ENCODE measurements at regions of chr9 and their contacts with region 1.

Region 1: GRCh38 chr9:133485361-133486260 is 6.7 kb upstream of the SLC2A6 start:
- DNase-seq: peak in 3 of 6 donors; percentile 15 to 74 (median 61)
- ATAC-seq: peak; percentile 18 to 37 (median 26)
- H3K4me3 ChIP-seq: no peak overlapping the region
- H3K27ac ChIP-seq: no peak overlapping the region
- H3K4me1 ChIP-seq: no peaks in the 10 kb centered on the region
- H3K27me3 ChIP-seq: no peaks in the 10 kb centered on the region
- CTCF ChIP-seq: no peak

Region 2: GRCh38 chr9:133184962-133185361 is 300.6 kb before region 1 on chr9:
- intact Hi-C with region 1: loop called in 2 of 3 experiments (anchors 5 to 10 kb)
- DNase-seq: peak in 2 of 6 donors; percentile 30 to 42
- ATAC-seq: peak; percentile 72 to 91 (median 87)
- H3K4me3 ChIP-seq: no peak overlapping the region
- H3K27ac ChIP-seq: no peak overlapping the region
- H3K4me1 ChIP-seq: no peaks in the 10 kb centered on the region
- H3K27me3 ChIP-seq: no peaks in the 10 kb centered on the region
- CTCF ChIP-seq: peak in 2 of 4 donors; percentile 32 to 38

Region 3: DNA sequence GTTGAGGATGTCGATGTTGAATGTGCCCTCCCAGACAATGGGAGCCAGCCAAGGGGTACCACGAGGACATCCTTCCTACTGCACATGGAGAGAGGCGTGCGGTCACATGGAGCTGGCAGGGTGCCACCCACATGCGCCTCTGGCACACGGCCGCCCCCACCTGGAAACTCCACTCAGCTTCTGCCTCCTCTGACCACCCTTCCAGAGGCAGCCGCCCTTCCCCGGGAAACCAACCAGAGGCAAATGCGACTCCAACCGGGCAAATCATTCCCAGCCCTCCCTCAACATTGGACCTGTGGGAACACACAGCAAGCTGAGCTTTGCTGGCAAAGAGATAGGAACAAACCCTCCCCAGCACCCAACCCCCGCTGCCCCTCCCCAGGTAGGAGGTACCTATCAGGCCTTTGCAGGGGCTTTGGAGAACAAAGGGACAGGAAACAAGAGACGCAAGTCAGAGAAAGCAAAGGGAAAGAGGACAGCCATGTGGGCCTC is 228.1 kb before region 1 on chr9:
- intact Hi-C with region 1: no loop called
- DNase-seq: peak in 1 of 6 donors; percentile 62
- ATAC-seq: peak in 2 of 4 donors; percentile 5 to 29
- H3K4me3 ChIP-seq: no peak overlapping the region
- H3K27ac ChIP-seq: no peak overlapping the region
- H3K4me1 ChIP-seq: no peaks in the 10 kb centered on the region
- H3K27me3 ChIP-seq: no peaks in the 10 kb centered on the region
- CTCF ChIP-seq: no peak

Region 4: DNA sequence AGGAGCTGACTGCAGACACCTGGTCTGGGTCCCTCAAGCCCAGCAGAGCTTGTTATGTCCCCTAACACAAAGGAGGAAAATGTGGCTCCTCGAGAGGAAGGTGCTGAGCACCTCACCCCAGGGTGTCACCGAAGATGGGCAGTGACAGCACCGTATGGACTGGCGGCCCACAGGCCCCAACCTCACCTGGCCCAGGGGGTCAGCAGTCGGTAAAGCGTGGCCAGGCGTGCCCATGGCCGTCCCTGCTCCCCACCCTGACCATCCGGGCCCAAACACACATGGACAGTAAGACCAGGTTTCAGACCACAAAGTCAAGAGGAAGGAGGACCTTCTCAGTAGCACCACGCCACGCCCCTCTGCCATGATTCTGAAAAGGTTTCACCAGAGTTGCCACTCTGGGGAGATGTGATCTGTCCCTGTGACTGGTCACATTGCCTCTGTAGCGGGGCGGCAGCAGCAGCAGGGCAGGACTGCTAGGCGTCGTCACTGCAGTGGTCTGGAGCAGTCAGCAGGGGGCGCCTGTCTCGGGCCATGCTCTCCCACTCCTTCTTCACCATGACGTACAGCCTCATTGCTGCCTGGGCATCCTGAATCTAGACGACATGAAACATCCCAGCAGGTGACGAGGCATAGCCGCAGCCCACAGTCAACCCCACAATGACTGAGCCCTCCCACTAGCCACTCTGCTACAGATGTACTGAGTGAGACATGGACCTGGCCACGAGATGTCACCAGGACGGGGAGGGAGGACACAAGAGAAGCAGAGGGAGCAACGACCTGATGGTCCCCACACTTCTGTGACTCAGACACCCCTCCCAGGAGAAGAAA is 78.9 kb before region 1 on chr9:
- intact Hi-C with region 1: loop called in 2 of 3 experiments (anchors 5 kb)
- DNase-seq: peak; percentile 68 to 90 (median 80)
- ATAC-seq: peak; percentile 81 to 93 (median 88)
- H3K4me3 ChIP-seq: no peak overlapping the region
- H3K27ac ChIP-seq: no peak overlapping the region
- H3K4me1 ChIP-seq: no peaks in the 10 kb centered on the region
- H3K27me3 ChIP-seq: no peaks in the 10 kb centered on the region
- CTCF ChIP-seq: peak; percentile 81 to 94 (median 92)